Colonic mucosa (tissue), 4 donors: ENCODE measurements at regions of chr18 and their contacts with region 1.

Region 1: GRCh38 chr18:2932247-2933181 is 80.4 kb downstream of the LPIN2 start:
- DNase-seq: peak; percentile 66
- H3K4me3 ChIP-seq: no peak overlapping the region
- H3K27ac ChIP-seq: no peak overlapping the region
- H3K4me1 ChIP-seq: no peaks in the 10 kb centered on the region
- H3K27me3 ChIP-seq: no peaks in the 10 kb centered on the region
- CTCF ChIP-seq: peak; percentile 68

Region 2: GRCh38 chr18:2985628-2986027 is 53.1 kb after region 1 on chr18:
- intact Hi-C with region 1: loop called (anchors 10 kb)
- DNase-seq: no peak
- H3K4me3 ChIP-seq: no peak overlapping the region
- H3K27ac ChIP-seq: peak overlapping the region; percentile 82
- H3K4me1 ChIP-seq: peaks cover 13% of the 10 kb centered on the region
- H3K27me3 ChIP-seq: no peaks in the 10 kb centered on the region
- CTCF ChIP-seq: peak; percentile 52

Region 3: DNA sequence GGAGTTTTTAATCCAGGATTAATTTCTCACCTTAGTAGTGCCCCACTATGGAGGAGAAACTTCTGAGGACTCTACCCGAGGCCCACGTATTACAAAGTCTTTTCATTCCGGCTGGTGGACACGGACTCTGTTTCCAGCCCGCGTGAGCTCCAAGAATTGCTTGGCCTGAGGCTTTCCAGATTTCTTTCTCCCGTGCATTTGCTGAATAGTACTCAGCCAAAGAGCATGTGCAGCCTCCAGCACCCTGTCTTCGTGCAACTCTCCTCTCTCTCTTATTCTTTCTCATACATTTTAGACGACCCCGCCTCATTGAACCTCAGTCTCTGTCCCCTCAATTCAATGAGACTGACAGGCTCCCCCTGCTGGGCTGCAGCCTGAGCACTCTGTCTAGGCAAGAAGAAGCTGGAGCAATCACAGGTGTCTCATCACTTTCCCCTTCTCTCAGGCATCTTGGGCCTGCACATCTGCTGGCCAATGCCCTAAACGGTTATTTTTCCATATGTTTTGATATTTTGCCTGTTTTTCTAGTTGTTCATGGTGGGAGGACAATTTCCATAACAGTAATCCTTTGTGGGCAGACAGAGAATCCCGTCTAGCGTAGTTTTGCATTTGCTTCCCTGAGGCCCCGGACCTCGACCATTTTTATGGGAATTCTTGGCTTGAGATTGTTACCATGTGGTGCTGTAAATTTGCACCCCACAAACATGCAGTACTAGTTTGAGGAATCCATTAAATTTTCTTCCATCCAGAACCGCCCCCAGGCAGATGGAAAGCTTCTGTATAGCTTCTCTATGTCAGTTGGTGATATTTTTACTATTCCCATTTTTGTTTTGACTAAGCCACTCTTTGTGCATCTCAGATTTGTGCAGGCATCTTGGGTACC is 130.5 kb after region 1 on chr18:
- intact Hi-C with region 1: loop called (anchors 5 kb)
- DNase-seq: peak; percentile 82
- H3K4me3 ChIP-seq: no peak overlapping the region
- H3K27ac ChIP-seq: peak overlapping the region; percentile 48
- H3K4me1 ChIP-seq: no peaks in the 10 kb centered on the region
- H3K27me3 ChIP-seq: no peaks in the 10 kb centered on the region
- CTCF ChIP-seq: peak; percentile 70

Region 4: DNA sequence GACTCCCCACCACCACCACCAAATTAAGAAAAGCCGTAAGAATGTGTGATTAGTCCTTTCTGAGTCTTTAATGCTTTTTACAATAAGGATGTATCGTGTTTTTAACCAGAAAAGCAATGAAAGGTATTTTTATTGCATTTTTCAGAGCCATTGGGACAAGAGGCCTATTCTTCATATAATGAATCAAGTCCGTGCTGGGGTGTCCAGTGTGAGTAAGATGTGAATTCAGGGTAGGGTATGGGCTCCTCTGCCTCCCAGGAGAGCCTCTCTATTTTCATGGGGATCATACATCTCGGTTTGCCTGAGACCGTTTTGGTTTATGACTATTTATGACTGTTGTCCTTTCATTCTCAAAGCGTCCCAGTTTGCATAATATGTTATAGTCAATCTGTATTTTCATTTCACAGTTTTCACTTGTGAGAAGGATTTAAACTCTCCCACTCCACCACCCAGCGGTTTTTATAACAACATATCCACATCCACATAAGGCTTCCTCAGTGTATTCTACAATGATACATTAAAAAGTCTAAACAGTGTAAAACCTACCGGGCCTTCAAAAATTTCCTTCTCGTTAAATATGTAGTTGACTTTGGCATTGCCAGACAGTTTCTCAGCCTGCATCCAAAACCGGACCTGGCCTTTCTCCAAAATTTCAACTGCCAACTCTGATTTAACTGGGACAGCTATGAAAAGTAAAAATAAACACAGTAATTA is 161.3 kb after region 1 on chr18:
- intact Hi-C with region 1: no loop called
- DNase-seq: peak; percentile 69
- H3K4me3 ChIP-seq: no peak overlapping the region
- H3K27ac ChIP-seq: peak overlapping the region; percentile 15
- H3K4me1 ChIP-seq: peaks cover 4% of the 10 kb centered on the region
- H3K27me3 ChIP-seq: no peaks in the 10 kb centered on the region
- CTCF ChIP-seq: no peak

Region 5: DNA sequence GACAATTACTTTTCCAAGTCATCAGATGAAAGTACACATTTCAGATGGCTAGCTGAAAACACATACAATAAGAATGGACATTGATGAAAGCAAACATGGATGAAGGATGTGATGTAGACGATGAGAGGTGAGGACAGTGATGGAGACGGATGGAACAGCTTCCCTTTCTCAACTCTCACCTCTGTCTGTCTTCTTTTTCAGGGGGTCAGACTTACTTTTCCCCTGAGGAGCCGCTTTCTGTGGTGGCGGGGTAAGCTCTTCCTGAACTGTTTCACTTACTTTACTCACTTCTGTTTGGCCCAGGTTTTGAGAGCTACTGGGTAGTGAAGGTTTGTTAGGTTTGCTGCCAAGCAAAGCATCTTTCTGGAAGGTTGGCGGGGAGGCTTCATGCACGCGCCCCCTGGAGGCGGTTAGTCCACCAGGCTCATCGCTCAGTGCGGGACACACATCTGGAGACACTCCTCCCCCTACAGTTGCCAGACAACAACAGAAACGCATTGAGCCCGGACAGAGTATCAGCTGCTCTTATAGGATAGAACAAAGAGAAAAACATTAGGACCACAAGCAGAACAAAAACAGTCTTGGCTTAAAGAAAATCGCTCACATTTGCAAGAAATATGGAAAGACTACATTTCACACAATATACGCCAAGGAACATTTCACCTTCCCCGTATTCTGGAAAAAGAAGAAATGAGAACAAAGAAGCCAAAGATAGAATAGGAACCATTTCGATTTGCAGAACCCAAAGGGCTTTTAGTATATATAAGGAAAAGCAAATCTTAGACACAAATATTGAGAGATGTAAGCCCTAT is 196.7 kb after region 1 on chr18:
- intact Hi-C with region 1: loop called (anchors 5 kb)
- DNase-seq: peak; percentile 85
- H3K4me3 ChIP-seq: no peak overlapping the region
- H3K27ac ChIP-seq: no peak overlapping the region
- H3K4me1 ChIP-seq: no peaks in the 10 kb centered on the region
- H3K27me3 ChIP-seq: no peaks in the 10 kb centered on the region
- CTCF ChIP-seq: peak; percentile 75

Region 6: DNA sequence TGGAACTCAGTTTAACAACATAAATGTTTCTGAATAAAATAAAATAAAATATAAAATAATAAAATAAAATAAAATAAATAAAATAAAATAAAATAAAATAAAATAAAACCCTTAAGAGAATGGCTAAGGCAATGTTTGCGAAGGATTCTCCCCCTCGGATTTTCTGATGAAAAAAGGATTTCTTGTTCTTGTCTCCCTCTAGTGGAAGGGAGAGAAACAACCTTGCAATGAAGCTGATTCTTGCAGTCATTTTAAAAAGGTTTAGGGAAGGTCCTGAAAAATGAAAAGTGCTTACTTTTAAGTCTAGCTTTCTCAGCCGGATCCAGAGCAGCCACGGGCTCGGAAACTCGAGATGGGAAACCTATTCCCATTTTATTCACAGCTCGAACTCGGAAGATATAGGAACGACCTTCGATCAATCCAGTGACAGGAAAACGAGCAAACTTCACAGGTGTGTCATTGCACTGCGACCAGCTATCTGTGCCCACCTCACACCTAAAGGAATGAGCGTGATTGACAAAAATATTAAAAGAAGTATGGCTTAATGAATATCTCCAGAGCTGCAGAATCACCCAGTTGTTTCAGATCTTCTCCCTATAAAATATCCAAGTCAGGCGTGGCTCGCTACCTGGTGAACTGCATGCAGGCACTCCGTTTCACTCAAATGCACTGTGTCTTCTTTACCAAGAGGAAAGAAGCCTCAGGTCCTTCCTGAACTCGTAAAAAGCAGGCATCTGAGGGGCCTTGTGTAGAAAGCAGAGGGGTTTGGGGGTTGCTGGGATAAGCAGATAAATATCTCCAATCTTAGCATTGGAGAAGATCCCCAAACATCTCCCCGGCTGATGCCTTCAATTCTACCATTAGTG is 219.1 kb after region 1 on chr18:
- intact Hi-C with region 1: loop called (anchors 5 kb)
- DNase-seq: no peak
- H3K4me3 ChIP-seq: peak overlapping the region; percentile 25
- H3K27ac ChIP-seq: no peak overlapping the region
- H3K4me1 ChIP-seq: no peaks in the 10 kb centered on the region
- H3K27me3 ChIP-seq: no peaks in the 10 kb centered on the region
- CTCF ChIP-seq: peak; percentile 85

Region 7: DNA sequence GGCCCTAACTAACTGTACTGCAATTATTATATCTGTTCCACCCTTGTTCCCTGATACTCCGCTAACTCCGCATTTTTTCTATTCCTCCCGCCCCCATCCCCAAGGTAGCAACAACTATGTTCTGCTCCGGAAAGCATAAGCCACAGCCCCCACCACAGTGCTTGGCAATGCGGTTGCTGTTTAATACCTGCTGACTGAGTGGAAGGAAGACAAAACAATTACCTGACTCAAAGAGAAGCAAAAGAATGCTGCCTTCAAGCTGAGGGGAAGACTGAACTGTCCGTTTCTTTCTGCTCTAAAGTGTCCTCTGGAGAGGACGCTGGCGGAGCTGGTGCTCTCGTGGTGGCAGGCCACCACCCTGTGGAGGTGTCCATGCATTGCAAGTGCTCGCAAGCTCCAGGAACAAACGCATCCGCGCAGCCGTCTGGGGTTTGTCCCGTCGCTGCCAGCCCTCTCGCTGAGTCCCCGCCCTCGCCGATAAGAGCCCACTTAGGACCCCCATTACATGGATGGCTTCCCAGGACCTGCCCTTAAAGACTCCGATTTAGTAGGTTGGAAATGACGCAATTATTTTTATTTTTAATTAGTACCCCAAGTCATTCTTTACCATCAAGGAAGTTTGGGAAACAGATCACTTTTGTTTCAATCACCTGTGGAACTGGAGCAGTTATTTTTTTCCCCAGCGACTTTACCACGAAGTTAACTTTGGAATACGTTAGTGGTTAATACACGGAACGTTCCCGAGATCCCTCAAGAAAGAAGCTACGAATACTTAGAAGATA is 313.5 kb after region 1 on chr18:
- intact Hi-C with region 1: loop called (anchors 5 kb)
- DNase-seq: peak; percentile 90
- H3K4me3 ChIP-seq: peak overlapping the region; percentile 93
- H3K27ac ChIP-seq: peak overlapping the region; percentile 99
- H3K4me1 ChIP-seq: no peaks in the 10 kb centered on the region
- H3K27me3 ChIP-seq: no peaks in the 10 kb centered on the region
- CTCF ChIP-seq: peak; percentile 92